ENCODE measurements at regions of chr4 and their contacts with region 1.

Region 1: GRCh38 chr4:37889849-37890800 is 759 bp upstream of the TBC1D1 start:
- DNase-seq: peak; percentile 75 to 83
- H3K4me3 ChIP-seq: peak overlapping the region; percentile 76 to 94 (median 90)
- H3K27ac ChIP-seq: peak overlapping the region; percentile 68 to 97 (median 85)
- H3K4me1 ChIP-seq: peaks cover 14 to 51% (median 31%) of the 10 kb centered on the region in 4 donors
- H3K27me3 ChIP-seq: peaks cover 0 to 44% (median 9%) of the 10 kb centered on the region in 3 donors
- CTCF ChIP-seq: peak in 2 of 7 experiments; percentile 15 to 17
- EP300 ChIP-seq: peak; percentile 4
- POLR2A ChIP-seq: no peak

Region 2: DNA sequence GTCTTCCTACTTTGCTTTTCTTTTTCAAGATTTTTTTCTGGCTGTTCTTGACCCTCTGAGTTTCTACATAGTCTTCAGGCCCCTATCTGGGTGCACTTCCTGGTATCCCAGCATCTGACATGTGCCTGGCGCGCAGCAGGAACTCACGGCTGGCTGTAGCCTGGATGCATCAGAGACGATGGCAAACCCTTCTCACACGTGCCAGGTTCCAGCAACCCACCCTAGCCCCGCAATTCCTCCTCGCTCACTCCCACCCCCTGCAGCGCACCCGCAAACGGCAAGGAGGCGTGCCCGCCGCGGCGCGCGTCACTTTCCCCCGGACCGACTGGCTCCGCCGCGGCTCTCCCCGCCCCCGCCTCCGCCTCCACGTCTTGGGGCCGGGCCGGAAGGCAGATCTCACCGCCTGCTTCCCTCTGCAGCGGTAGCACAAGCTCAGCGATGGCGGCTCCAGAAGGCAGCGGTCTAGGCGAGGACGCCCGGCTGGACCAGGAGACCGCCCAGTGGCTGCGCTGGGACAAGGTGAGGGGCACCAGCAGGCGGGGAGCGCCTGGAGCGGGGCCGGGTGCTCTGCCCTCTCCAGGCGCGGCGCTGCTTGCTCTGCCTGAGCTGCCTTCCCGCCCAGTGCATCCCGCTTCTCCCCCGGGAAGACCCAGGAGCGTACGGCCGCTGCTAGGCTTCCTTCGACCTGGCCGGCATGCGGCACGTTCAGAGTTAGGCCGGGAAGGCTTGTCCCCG is 63.7 kb before region 1 on chr4 and contains the start of gene PGM2:
- intact Hi-C with region 1: loop called (anchors 10 kb)
- DNase-seq: peak; percentile 89 to 97
- H3K4me3 ChIP-seq: peak within 1 kb of the TSS; percentile 74 to 95 (median 88)
- H3K27ac ChIP-seq: peak within 1 kb of the TSS; percentile 83 to 90 (median 88)
- H3K4me1 ChIP-seq: peaks cover 8 to 36% (median 23%) of the 10 kb centered on the region in 4 donors
- H3K27me3 ChIP-seq: no peaks in the 10 kb centered on the region
- CTCF ChIP-seq: no peak
- EP300 ChIP-seq: no peak
- POLR2A ChIP-seq: peak in 1 of 4 donors; percentile 75
- total RNA-seq, gene PGM2: 8.7 to 53.1 (median 14.0) TPM